Aorta (tissue), 5 donors: ENCODE measurements at regions of chr21 and their contacts with region 1.

Region 1: GRCh38 chr21:37338671-37339551 is 27.7 kb upstream of the DYRK1A start:
- DNase-seq: peak; percentile 59 to 79
- ATAC-seq: peak; percentile 87
- H3K4me3 ChIP-seq: no peak overlapping the region
- H3K27ac ChIP-seq: peak overlapping the region; percentile 91 to 97
- H3K4me1 ChIP-seq: no peaks in the 10 kb centered on the region
- H3K27me3 ChIP-seq: no peaks in the 10 kb centered on the region

Region 2: GRCh38 chr21:37267269-37268184 is 71.4 kb before region 1 on chr21 and contains the start of gene VPS26C:
- intact Hi-C with region 1: loop called (anchors 2 to 10 kb)
- DNase-seq: peak; percentile 99
- ATAC-seq: peak; percentile 99
- H3K4me3 ChIP-seq: peak within 1 kb of the TSS; percentile 72 to 76
- H3K27ac ChIP-seq: peak within 1 kb of the TSS; percentile 16 to 93
- H3K4me1 ChIP-seq: peaks cover 0 to 4% of the 10 kb centered on the region in 2 donors
- H3K27me3 ChIP-seq: no peaks in the 10 kb centered on the region
- total RNA-seq, gene VPS26C: 46.5 to 61.6 TPM

Region 3: DNA sequence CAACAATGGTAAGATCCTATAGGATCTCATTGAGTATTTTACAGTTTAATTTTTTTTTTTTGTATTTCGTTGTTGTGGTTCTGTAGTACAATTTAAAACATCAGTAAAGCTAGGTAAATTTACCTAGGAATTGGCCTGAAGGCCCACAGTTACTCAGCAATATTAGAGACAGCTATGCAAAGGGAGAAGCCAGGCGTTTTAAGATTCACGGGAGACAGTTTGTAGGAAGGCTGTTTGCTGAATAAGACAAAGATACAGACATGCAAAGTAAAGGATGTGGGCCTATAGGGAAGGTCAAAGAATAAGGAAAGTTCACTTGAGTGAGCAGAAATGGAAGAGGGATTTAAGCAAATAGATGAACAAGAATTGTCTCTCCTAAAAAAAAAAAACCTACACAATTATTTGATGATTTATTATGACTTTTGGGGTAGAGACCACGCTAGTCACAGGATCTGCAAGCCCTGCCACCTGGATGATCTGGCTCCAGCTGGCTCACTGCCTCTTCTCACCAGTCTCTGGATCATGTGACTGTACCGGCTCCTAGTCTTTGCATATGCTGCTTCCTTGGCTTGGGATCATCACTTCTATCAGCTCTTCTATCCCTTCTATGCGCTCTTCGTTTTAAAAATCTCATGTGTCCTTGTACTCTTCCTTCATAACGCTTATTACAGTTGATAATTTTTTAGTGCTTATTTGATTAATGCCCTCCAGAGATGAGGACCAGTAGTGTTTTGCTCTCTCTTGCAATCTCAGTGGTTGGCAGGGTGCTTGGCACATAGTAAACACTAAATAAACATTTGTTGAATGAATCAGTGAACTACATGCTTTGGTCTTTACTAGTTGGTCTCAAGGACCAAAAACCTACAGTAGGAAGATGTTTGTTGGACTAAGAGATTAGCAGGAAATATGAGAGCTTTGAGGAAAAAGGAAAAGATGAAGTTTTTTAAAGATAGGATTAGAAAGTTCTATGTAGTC is 41.7 kb after region 1 on chr21:
- intact Hi-C with region 1: no loop called
- DNase-seq: no peak
- ATAC-seq: no peak
- H3K4me3 ChIP-seq: no peak overlapping the region
- H3K27ac ChIP-seq: no peak overlapping the region
- H3K4me1 ChIP-seq: peaks cover 10 to 20% of the 10 kb centered on the region in 2 donors
- H3K27me3 ChIP-seq: no peaks in the 10 kb centered on the region

Region 4: DNA sequence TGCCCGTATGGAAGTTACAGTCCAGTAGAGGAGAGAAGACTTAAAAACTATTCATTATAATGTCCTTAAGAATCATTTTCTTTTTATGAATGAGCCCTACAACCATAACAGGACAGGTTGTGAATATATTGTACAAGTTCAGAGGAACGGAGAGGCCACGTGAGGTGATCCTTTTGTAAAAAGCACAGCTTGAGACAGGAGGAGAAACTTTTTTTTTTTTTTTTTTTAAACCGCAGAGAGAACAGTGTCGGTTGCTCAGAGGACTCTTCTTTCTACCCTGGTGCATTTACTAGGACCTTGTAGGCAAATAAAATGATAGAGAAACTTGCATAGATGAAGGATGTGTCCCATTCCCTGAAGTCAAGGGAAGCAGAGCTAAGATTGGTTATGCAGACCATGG is 59.8 kb after region 1 on chr21:
- intact Hi-C with region 1: no loop called
- DNase-seq: no peak
- ATAC-seq: no peak
- H3K4me3 ChIP-seq: no peak overlapping the region
- H3K27ac ChIP-seq: no peak overlapping the region
- H3K4me1 ChIP-seq: peaks cover under 1 to 11% of the 10 kb centered on the region in 2 donors
- H3K27me3 ChIP-seq: no peaks in the 10 kb centered on the region

Region 5: DNA sequence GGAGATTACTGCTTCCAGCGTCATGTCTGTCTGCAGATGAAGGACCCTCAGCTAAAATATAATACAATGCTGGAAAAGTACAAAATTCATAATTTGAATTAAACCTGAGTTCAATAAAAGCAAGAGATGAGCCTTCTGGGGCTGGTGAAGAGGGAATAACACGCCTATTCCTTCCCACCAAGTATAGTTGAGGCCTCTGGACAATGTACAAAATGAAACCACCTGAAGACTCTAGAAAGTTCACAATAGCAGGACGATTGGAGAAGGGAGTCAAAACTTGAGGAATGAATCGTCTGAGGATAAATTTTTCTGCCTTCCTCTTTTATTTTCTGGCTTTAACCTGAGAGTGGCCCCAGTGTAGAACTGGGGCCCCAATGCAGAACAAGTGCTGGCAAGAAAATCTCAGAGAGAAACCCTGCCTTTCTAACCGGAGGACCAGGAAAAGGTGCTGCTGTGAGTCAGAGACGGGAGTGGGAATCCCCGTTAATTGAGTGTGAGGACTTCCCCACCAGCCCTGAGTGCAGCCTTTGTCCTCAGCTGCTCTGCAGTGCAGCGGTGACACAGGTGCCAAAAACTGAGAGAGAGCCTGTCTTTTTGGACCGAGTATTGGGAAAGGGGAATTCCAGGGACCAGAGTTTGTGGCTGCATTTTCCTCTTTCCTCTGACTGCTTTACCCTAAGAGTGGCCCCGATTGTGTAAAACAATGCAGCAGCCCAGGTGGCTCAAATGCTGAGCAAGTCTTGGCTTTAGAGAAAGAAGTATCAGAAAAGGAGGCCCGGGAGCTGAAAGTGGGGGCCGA is 292.6 kb after region 1 on chr21:
- intact Hi-C with region 1: no loop called
- DNase-seq: no peak
- ATAC-seq: no peak
- H3K4me3 ChIP-seq: no peak overlapping the region
- H3K27ac ChIP-seq: no peak overlapping the region
- H3K4me1 ChIP-seq: peaks cover 0 to 4% of the 10 kb centered on the region in 2 donors
- H3K27me3 ChIP-seq: no peaks in the 10 kb centered on the region